ENCODE measurements at regions of chr3 and their contacts with region 1.

Region 1: GRCh38 chr3:184711493-184712247 is at the start of gene MAGEF1:
- DNase-seq: peak; percentile 87
- H3K4me3 ChIP-seq: peak within 1 kb of the TSS; percentile 77
- H3K27ac ChIP-seq: peak within 1 kb of the TSS; percentile 79
- H3K4me1 ChIP-seq: peaks cover 14% of the 10 kb centered on the region
- H3K27me3 ChIP-seq: no peaks in the 10 kb centered on the region
- CTCF ChIP-seq: no peak
- total RNA-seq, gene MAGEF1: 28.3 to 42.6 TPM

Region 2: DNA sequence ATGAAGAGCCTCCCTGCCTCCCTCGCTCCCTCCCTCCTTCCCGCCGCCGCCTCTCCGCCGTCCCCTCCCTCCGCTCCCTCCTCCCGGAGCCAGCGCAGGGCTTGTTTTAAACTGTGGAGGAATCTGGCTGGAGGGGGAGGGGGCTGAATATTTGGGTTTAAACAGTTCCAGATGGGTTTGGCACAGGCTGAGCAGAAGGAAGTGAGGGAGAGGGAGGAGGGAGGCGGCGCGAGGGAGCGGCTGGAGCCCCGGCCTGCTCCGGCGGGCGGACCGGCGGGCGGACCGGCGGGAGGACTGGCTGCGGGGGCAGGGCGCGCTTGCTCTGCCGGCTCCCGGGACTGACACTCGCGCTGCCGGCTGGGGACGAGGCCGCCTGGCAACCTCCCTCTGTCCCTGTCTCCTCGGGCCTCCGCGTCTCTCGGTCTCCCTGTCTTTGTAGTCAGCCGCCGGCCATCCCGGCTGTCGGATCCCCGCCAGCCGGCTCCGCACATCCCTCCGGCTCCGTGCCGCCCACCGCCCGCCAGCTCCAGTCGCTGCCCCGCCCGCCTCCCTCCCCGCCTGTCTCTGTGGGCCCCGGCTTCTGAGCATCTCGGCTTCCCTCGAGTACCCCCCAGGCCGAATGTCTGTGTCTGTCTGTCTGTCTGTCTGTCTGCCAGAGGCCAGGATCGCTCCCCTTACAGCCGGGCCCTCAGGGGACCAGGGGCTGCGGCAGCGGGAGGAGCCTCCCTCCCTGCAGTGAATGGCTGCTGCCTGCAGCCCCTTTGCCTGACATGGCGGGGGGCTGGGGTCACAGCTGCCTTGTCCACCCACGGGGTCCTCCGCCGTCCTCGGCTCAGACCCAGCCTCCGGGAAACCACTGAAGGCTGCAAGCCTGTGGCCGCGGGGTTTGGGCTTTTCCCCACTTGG is 142.5 kb before region 1 on chr3:
- intact Hi-C with region 1: loop called (anchors 5 kb)
- DNase-seq: peak; percentile 84
- H3K4me3 ChIP-seq: peak overlapping the region; percentile 46
- H3K27ac ChIP-seq: peak overlapping the region; percentile 44
- H3K4me1 ChIP-seq: peaks cover 29% of the 10 kb centered on the region
- H3K27me3 ChIP-seq: no peaks in the 10 kb centered on the region
- CTCF ChIP-seq: no peak

Region 3: DNA sequence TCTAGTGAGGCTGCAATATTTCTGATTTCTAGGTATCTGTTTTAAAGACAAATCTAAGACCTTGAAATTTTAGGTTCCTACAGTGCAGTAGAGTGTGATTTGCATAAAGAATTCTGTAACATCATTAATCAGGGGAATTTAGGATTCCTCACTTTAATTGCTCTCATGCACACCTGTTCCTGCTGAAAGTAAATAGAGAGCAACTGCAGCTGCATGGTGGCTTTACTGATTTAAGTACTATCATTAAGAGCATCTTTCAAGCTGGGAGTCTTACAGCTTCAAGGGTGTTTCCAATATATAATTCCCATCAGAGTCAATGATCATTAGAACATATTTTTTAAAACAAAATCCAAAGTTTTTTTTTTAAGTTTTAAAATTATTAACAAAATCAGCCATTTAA is 477.1 kb after region 1 on chr3:
- intact Hi-C with region 1: no loop called
- DNase-seq: no peak
- H3K4me3 ChIP-seq: no peak overlapping the region
- H3K27ac ChIP-seq: no peak overlapping the region
- H3K4me1 ChIP-seq: no peaks in the 10 kb centered on the region
- H3K27me3 ChIP-seq: no peaks in the 10 kb centered on the region
- CTCF ChIP-seq: no peak

Region 4: GRCh38 chr3:185242605-185243004 is 530.9 kb after region 1 on chr3:
- intact Hi-C with region 1: no loop called
- DNase-seq: no peak
- H3K4me3 ChIP-seq: no peak overlapping the region
- H3K27ac ChIP-seq: no peak overlapping the region
- H3K4me1 ChIP-seq: no peaks in the 10 kb centered on the region
- H3K27me3 ChIP-seq: no peaks in the 10 kb centered on the region
- CTCF ChIP-seq: no peak

Measured in colonic mucosa (tissue), 4 donors.